Gastrocnemius medialis (tissue), 4 donors: ENCODE measurements at regions of chr19 and their contacts with region 1.

Region 1: DNA sequence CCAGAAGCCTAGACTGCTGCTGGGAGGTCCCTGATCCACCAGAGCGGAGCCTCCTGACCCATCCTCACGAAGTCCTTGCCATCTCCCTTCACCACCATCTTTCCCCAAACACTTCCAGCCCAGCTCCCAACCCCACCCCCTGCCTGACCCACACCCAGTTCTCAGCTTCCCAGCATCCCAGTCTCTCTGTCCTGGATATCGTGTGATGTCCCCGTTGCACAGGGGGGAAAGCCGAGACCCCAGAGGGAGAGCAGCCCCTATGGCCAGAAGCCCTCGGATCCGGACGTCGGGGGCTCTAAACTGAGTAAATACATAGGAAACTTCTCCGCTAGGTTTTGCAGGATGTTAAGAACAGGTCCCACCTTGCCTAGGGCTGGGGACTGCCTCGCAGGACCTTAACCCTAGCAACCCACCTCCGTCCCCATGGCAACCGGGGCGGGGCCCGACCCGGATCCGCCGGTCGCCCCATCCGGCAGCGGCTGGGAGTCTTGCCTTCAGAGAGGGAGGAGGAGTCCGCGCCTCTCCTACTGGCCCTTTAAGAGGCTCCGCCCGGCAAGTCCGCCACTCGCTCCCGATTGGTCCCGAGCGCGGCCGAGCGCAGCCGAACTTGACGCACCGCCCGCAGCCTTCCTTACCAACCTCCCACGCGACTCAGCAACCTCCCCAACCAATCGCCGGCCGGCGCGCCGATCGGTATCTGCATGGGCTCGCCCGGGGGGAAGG is 451 bp upstream of the HMG20B start:
- DNase-seq: peak; percentile 99 to 100
- ATAC-seq: peak; percentile 92 to 96
- H3K4me3 ChIP-seq: peak overlapping the region; percentile 63 to 92 (median 84)
- H3K27ac ChIP-seq: peak overlapping the region; percentile 32 to 82 (median 58)
- H3K4me1 ChIP-seq: peaks cover 16 to 24% of the 10 kb centered on the region in 2 donors
- H3K27me3 ChIP-seq: no peaks in the 10 kb centered on the region
- CTCF ChIP-seq: no peak
- POLR2A ChIP-seq: no peak

Region 2: DNA sequence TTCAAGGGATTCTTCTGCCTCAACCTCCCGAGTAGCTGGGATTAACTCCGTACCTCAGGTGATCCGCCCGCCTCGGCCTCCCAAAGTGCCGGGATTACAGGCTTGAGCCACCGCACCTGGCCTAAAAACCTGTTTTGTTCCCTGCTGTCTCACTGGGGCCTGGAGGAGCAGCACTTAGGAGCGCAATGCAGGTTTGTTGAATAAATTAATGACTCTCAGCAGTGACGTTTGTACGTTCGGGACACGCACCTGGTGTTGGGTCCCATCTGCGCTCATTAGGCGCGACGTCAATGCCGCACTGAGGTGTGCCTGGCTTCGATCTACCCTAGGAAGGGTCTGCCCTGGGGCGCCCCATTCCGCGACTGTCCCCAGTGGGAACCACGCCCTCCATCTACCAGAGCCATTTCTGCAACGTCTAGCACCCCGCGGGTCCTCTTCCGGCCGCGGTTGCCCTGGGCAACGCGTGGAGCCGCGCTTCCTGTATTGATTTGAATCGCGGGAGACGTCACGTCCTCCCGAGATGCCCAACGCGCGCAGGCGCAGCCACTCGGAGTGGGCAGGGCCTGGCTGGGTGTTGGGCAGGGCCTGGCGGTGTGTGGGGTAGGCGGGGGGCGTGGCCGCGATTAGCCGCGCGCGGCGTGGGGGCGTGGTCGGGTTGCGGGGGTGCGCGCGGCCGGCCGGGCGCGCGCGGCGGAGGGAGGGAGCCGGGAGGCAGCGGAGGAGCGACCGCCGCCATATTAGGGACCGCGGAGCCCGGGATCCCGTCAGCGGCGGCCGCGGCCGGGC is 66.5 kb before region 1 on chr19 and contains the start of gene FZR1:
- in situ Hi-C with region 1: no loop called
- intact Hi-C with region 1: loop called (anchors 2 kb)
- DNase-seq: peak; percentile 96 to 98
- ATAC-seq: peak; percentile 92 to 95
- H3K4me3 ChIP-seq: peak within 1 kb of the TSS; percentile 56 to 100 (median 82)
- H3K27ac ChIP-seq: peak within 1 kb of the TSS; percentile 80 to 90 (median 84)
- H3K4me1 ChIP-seq: peaks cover 15 to 35% of the 10 kb centered on the region in 2 donors
- H3K27me3 ChIP-seq: no peaks in the 10 kb centered on the region
- CTCF ChIP-seq: no peak
- POLR2A ChIP-seq: peak; percentile 88
- total RNA-seq, gene FZR1: 15.9 to 32.0 (median 21.0) TPM

Region 3: DNA sequence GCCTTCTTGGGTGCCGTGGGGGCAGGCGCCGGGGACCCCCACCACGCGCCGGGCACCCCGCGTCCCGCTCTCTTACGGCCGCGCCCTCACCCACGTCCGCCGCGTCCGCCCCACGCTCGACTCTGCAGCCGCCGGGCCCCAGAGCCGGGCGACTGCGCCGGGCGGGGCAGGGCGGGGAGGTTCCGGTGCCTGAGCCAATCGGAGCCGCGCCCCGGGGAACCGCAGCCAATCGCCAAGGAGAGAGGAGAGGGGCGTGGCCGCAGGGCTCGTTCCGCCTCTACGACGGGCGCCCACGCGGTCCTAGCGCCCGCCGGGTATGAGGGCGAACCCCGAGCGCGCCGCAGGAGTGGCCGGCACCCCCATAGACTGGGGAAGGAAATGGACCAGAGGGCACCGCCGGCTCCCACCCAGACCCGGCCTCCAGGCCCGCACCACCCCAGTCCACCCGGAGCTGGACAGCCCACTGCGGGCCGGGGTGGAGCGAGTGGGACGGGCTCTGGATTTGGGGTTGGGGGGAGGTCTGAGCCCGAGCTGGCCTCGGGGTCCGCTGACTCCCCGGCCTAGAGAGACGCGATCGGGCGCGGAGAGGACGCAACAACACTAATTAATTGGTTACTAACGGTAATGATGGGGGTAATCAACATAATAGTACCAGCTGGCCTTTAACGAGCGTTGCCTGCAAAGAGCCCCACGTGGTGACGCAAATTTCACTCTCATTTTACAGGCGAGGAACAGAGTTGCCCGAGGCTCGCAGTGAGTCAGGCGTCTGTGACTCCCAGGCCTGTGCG is 14.6 kb before region 1 on chr19 and contains the start of gene MFSD12:
- in situ Hi-C with region 1: no loop called
- intact Hi-C with region 1: loop called (anchors 1 kb)
- DNase-seq: peak; percentile 93
- ATAC-seq: peak; percentile 89 to 91
- H3K4me3 ChIP-seq: peak within 1 kb of the TSS; percentile 79 to 91 (median 86)
- H3K27ac ChIP-seq: peak within 1 kb of the TSS; percentile 89 to 94 (median 90)
- H3K4me1 ChIP-seq: peaks cover 19% of the 10 kb centered on the region in 2 donors
- H3K27me3 ChIP-seq: no peaks in the 10 kb centered on the region
- CTCF ChIP-seq: no peak
- POLR2A ChIP-seq: peak; percentile 92 to 94
- total RNA-seq, gene MFSD12: 22.3 to 77.3 (median 48.7) TPM

Region 4: DNA sequence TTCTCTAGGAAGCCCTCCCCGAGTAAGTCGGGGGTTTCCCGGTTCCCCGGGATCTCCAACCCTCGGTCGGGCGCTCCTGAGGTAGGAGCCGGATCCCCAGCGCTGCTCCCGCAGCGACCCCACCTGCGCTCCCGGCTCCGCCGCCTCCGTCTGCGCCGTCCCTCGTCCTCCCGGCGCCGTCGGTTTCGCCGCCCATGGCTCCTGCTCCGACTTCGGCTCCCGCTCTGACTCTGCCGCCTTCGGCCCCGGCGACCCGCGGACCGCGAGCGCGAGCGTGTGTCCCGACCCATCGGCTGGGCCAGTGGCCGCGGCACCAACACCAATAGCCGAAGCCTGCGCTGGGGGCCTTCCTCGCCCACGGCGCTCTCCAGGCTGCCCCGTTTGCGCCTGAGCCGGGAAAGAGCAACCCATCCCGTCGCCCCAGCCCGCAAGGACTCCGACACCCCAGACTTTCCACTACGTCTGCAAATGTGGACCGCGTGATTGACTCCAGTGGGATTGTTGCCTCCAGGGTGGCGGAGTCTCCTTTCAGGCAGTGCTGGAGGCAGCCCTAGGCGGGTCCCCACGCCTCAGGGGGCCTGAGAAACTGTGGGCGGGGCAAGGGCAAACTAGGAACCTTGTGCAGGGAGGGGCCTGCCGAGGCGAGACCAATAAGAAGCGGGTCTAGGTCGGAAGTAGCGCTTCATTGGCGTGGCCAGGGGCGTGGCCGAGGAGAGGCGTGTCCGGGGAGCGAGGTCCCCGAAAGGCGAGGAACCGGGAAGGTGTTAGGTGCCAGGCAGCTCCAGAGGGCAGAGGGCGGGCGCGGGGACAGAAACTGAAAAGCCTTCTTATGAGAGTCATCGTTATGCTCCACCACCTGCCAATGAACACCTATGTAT is 54.4 kb after region 1 on chr19 and contains the start of gene CACTIN:
- in situ Hi-C with region 1: no loop called
- intact Hi-C with region 1: loop called (anchors 2 kb)
- DNase-seq: peak; percentile 98 to 99
- ATAC-seq: peak; percentile 96 to 98
- H3K4me3 ChIP-seq: peak within 1 kb of the TSS; percentile 92 to 100 (median 98)
- H3K27ac ChIP-seq: peak within 1 kb of the TSS; percentile 88 to 98 (median 96)
- H3K4me1 ChIP-seq: peaks cover 19 to 21% of the 10 kb centered on the region in 2 donors
- H3K27me3 ChIP-seq: no peaks in the 10 kb centered on the region
- CTCF ChIP-seq: peak in 1 of 5 experiments; percentile 52
- POLR2A ChIP-seq: peak; percentile 81 to 85
- total RNA-seq, gene CACTIN: 19.5 to 28.4 (median 27.4) TPM

Region 5: DNA sequence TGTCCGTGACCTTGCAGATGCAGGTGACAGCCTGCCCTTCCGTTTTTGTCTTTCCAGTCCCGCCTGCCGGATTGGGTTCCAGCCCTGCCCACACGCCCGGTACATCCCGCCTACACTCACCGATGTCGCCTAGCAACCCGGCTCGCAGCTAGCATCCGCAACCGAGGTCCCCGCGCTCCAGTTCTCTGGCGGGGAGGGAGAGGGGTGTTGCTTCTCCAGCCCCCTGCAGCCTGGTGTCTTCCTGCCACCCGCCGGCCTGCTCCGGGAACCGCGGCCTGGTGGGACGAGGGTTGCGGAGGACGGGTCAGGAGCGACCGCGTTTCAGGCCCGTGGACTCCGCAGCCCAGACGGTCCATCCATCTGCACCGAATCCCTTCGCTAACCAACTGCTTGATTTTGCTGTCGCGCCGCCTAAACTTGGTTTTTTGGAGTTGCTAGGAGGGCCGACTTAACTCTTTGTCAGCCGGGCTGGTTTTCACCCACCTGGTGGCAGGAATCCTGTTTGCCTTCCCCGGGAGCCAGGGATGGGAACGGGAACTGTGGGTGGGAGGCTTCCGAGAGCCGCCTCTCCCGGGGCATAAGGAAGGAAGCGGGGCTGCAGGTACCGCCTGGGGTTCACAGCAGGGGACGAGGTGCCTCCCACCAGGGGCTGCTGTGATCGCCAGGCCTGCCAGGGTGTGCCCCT is 229.3 kb after region 1 on chr19:
- in situ Hi-C with region 1: no loop called
- intact Hi-C with region 1: no loop called
- DNase-seq: no peak
- ATAC-seq: no peak
- H3K4me3 ChIP-seq: no peak overlapping the region
- H3K27ac ChIP-seq: no peak overlapping the region
- H3K4me1 ChIP-seq: peaks cover 0 to 3% of the 10 kb centered on the region in 2 donors
- H3K27me3 ChIP-seq: peaks cover 50 to 66% (median 64%) of the 10 kb centered on the region in 3 donors
- CTCF ChIP-seq: no peak
- POLR2A ChIP-seq: no peak